ENCODE measurements at regions of chr12 and their contacts with region 1.

Region 1: GRCh38 chr12:80622271-80622670 is 85.2 kb upstream of the MYF6 start:
- DNase-seq: no peak

Region 2: DNA sequence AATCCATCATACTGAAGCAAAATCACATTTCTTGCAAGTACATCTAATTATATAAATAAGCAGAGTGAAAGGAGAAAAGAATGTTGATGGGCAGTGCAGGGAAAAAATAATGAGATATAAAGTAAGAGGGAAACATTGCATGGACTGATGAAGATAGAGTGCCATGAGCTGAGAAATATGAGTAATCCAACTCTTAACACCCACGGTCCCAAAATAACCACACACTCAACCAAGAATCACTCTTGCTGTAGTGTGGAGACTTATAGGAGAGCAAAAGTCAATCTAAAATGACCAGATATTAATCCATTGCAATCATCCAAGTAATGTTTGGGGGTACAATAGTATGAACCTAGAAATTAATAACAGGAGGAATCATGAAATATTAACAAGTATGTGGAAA is 134.6 kb after region 1 on chr12:
- intact Hi-C with region 1: loop called (anchors 10 kb)
- DNase-seq: no peak

Measured in cardiac septum (tissue), 1 donor.